Calu3 (cell line): ENCODE measurements at regions of chr6 and their contacts with region 1.

Region 1: GRCh38 chr6:95866732-95867131 is 149.0 kb upstream of the FUT9 start:
- DNase-seq: peak; percentile 30
- H3K4me3 Mint-ChIP-seq: no peak overlapping the region
- H3K27ac Mint-ChIP-seq: no peak overlapping the region
- H3K4me1 Mint-ChIP-seq: no peaks in the 10 kb centered on the region
- H3K27me3 Mint-ChIP-seq: no peaks in the 10 kb centered on the region
- CTCF ChIP-seq: no peak

Region 2: GRCh38 chr6:95364016-95364604 is 502.6 kb before region 1 on chr6:
- CTCF ChIA-PET with region 1: no interaction called
- intact Hi-C with region 1: loop called (anchors 1 kb)
- DNase-seq: no peak
- H3K4me3 Mint-ChIP-seq: no peak overlapping the region
- H3K27ac Mint-ChIP-seq: no peak overlapping the region
- H3K4me1 Mint-ChIP-seq: peaks cover 8% of the 10 kb centered on the region
- H3K27me3 Mint-ChIP-seq: no peaks in the 10 kb centered on the region
- CTCF ChIP-seq: no peak

Region 3: GRCh38 chr6:95690328-95690727 is 176.4 kb before region 1 on chr6:
- CTCF ChIA-PET with region 1: no interaction called
- intact Hi-C with region 1: loop called (anchors 5 kb)
- DNase-seq: no peak
- H3K4me3 Mint-ChIP-seq: peak overlapping the region; percentile 36
- H3K27ac Mint-ChIP-seq: no peak overlapping the region
- H3K4me1 Mint-ChIP-seq: peaks cover 11% of the 10 kb centered on the region
- H3K27me3 Mint-ChIP-seq: no peaks in the 10 kb centered on the region
- CTCF ChIP-seq: no peak